OCI-LY7 (cell line): ENCODE measurements at regions of chr11 and their contacts with region 1.

Region 1: GRCh38 chr11:121383716-121384115 is 68.4 kb upstream of the SORL1 start:
- DNase-seq: no peak
- H3K4me3 ChIP-seq: no peak overlapping the region
- H3K27ac ChIP-seq: peak overlapping the region; percentile 84
- H3K4me1 ChIP-seq: peaks cover 92% of the 10 kb centered on the region
- CTCF ChIP-seq: no peak

Region 2: DNA sequence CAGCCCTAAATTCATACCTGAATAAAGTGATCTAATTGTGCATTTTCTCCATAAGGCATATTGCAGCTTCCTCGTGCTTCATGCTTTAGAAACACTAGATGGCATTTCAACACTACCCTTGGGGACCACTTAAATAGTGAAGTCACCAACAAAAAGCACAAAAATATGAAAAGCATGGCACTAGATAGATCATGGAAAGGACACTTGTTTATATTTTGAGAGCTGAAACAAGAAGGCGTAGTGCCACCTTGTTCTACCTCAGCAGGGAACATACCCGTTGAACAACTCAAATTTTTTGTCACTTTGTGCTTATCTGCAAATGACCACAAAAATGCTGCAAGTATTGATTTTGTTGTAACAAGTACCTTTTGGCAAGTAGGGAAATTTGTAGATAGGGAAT is 351.2 kb before region 1 on chr11:
- CTCF ChIA-PET with region 1: no interaction called
- POLR2A ChIA-PET with region 1: no interaction called
- intact Hi-C with region 1: no loop called
- DNase-seq: no peak
- H3K4me3 ChIP-seq: no peak overlapping the region
- H3K27ac ChIP-seq: no peak overlapping the region
- H3K4me1 ChIP-seq: no peaks in the 10 kb centered on the region
- CTCF ChIP-seq: 0 out of 2 replicates have a peak, but pooled peaks have one; percentile 18

Region 3: GRCh38 chr11:121417055-121417551 is 33.4 kb after region 1 on chr11:
- CTCF ChIA-PET with region 1: interaction called, 5 read pairs
- POLR2A ChIA-PET with region 1: interaction called, 14 read pairs
- intact Hi-C with region 1: no loop called
- DNase-seq: peak; percentile 41
- H3K4me3 ChIP-seq: no peak overlapping the region
- H3K27ac ChIP-seq: peak overlapping the region; percentile 91
- H3K4me1 ChIP-seq: peaks cover 79% of the 10 kb centered on the region
- CTCF ChIP-seq: no peak

Region 4: GRCh38 chr11:121661880-121662486 is 278.3 kb after region 1 on chr11:
- CTCF ChIA-PET with region 1: no interaction called
- POLR2A ChIA-PET with region 1: no interaction called
- intact Hi-C with region 1: no loop called
- DNase-seq: no peak
- H3K4me3 ChIP-seq: no peak overlapping the region
- H3K27ac ChIP-seq: no peak overlapping the region
- H3K4me1 ChIP-seq: no peaks in the 10 kb centered on the region
- CTCF ChIP-seq: no peak